AG04450 (cell line): ENCODE measurements at regions of chr17 and their contacts with region 1.

Region 1: DNA sequence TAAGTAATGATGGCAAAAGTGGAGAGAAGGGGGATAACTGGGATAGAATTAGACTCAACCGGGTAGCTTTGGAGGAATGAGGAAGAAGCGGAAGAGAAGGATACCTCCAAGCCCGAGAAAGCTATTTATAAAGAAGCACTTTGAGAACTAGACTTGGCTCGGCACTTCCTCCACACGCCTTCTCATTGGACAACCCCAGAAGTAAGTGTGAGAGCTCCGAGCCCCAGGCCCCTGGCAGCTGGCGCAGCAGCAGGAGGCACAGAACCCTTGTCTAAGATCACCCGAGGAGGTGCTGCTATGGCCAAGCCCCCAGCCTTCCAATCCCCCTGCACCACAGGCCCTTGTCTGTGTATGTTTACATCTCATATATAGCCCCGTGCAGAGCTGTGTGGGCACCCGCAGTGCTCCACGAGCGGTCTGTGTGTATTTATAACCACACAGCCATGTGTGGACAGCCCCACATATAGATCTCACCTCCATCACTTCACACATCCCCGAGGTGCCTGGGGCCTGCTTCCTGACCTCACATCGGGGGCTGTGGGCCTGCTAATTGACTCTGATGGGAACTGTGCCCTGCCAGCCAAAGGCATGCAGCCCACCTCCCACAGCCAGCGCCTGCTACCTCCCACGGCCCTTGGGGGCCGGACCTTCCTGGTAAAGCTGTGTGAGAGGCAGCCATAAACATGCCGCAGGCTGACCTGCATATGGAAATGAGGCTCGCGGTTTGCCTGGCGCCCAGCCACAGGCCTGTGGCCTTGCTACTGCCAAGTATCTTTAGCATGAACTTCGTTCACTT is 96.2 kb downstream of the C17orf67 start:
- DNase-seq: peak; percentile 58
- H3K4me3 ChIP-seq: no peak overlapping the region
- H3K27ac ChIP-seq: peak overlapping the region; percentile 21
- H3K27me3 ChIP-seq: peaks cover 11% of the 10 kb centered on the region
- CTCF ChIP-seq: no peak

Region 2: GRCh38 chr17:56880133-56880532 is 142.6 kb after region 1 on chr17:
- CTCF ChIA-PET with region 1: no interaction called
- POLR2A ChIA-PET with region 1: interaction called, 15 read pairs
- DNase-seq: no peak
- H3K4me3 ChIP-seq: no peak overlapping the region
- H3K27ac ChIP-seq: no peak overlapping the region
- H3K27me3 ChIP-seq: no peaks in the 10 kb centered on the region
- CTCF ChIP-seq: no peak